ENCODE measurements at regions of chr1 and their contacts with region 1.

Region 1: GRCh38 chr1:170687621-170688020 is 23.7 kb downstream of the PRRX1 start:
- DNase-seq: no peak
- ATAC-seq: no peak
- H3K4me3 Mint-ChIP-seq: no peak overlapping the region
- H3K27ac Mint-ChIP-seq: no peak overlapping the region
- H3K4me1 Mint-ChIP-seq: peaks cover 3% of the 10 kb centered on the region
- H3K27me3 Mint-ChIP-seq: peaks cover 10% of the 10 kb centered on the region

Region 2: DNA sequence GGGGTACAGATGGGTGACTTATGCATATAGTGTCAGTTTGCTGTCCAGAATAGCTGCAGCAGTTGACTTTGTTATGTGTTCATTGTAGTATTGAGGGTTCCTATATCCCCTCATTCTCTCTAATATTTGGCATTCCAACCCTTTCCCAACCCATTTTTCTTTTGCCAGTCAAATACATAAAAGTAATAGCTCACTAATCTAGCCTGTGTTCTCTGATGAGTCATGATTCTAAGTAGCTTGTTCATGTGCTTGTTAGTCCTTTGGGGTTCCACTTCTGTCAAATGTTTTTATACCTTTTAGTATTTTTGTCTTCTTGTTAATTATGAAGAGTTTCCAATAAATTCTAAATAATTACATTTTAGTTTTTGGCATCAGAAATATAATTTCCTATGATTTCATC is 148.5 kb after region 1 on chr1:
- CTCF ChIA-PET with region 1: no interaction called
- POLR2A ChIA-PET with region 1: no interaction called
- DNase-seq: no peak
- ATAC-seq: no peak
- H3K4me3 Mint-ChIP-seq: no peak overlapping the region
- H3K27ac Mint-ChIP-seq: no peak overlapping the region
- H3K4me1 Mint-ChIP-seq: no peaks in the 10 kb centered on the region
- H3K27me3 Mint-ChIP-seq: no peaks in the 10 kb centered on the region

Region 3: GRCh38 chr1:170929835-170930554 is 242.4 kb after region 1 on chr1:
- CTCF ChIA-PET with region 1: interaction called, 24 read pairs
- POLR2A ChIA-PET with region 1: no interaction called
- DNase-seq: peak; percentile 21
- ATAC-seq: peak; percentile 76
- H3K4me3 Mint-ChIP-seq: no peak overlapping the region
- H3K27ac Mint-ChIP-seq: no peak overlapping the region
- H3K4me1 Mint-ChIP-seq: no peaks in the 10 kb centered on the region
- H3K27me3 Mint-ChIP-seq: no peaks in the 10 kb centered on the region